ENCODE measurements at regions of chr5 and their contacts with region 1.

Region 1: GRCh38 chr5:91269198-91269597 is 113.9 kb downstream of the ARRDC3 start:
- DNase-seq: no peak

Region 2: GRCh38 chr5:91280362-91281269 is 11.4 kb after region 1 on chr5:
- CTCF ChIA-PET with region 1: interaction called, 4 read pairs
- POLR2A ChIA-PET with region 1: interaction called, 11 read pairs
- DNase-seq: peak; percentile 89

Region 3: DNA sequence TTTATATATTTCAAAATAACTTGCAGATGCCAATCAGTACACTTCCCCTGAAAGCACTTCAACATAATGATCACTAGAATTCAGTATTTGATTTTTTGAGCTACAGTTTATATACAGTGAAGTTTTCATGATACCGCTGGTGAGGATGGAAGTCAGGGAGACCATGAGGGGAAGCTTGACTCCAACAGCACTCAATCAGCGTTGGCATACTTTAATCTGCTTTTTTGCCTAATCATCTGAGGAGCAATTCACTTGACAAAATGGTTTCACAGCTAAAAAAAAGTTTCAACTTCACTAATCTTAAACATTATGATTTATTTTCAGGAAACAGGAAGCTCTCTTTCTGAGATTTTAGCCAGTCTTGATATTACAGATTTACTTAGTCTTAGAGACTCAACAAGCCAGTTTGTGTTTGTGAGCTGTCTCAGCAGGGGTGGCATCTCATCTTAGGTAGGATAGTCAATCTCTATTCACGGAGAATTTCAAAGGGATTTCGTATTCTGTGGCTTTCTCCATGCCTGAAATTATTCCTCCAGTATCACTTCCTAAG is 225.3 kb after region 1 on chr5:
- CTCF ChIA-PET with region 1: no interaction called
- POLR2A ChIA-PET with region 1: no interaction called
- DNase-seq: no peak